ENCODE measurements at regions of chr1 and their contacts with region 1.

Region 1: DNA sequence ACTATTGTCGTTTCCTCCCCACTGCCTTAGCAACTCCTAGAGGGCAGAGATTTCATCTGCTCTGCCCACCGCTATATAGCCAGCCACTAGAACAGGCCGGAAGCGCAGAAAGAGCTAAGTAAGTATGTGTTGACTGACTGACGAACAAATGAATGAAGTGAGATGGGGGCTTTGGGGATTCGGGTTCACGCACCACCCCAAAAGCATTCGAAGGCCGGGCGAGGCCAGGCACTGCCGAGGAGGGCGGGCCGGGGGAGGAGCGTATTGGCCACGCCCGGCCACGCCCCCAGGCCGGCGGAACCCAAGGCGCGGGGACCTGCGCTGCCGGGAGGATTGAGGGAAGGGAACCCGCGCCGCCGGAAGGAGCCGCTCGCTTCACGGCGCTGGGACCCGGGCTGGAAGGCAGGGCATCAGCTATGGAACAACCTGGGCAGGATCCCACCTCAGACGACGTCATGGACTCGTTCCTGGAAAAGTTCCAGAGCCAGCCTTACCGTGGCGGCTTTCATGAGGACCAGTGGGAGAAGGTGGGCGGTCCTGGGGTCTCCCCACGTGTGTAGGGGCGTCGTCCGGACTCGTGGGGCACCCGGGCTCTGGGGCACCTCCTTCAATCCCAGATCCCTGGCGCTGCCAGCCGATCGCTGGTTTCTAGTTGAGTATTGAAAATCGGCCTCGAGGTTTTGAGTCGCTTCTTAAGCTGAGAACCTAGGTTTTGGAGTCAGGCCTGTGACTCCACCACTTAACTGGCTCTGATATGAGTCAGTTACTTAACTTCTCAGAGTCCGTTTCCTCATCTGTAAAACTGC is at the start of gene TTC4:
- DNase-seq: peak; percentile 90
- H3K4me3 ChIP-seq: peak within 1 kb of the TSS; percentile 73 to 84 (median 77)
- H3K27ac ChIP-seq: peak within 1 kb of the TSS; percentile 75 to 86 (median 80)
- H3K4me1 ChIP-seq: peaks cover 0 to 18% (median 15%) of the 10 kb centered on the region in 4 donors
- H3K27me3 ChIP-seq: no peaks in the 10 kb centered on the region
- CTCF ChIP-seq: no peak
- EP300 ChIP-seq: no peak
- POLR2A ChIP-seq: peak; percentile 31 to 32
- total RNA-seq, gene TTC4: 12.6 to 33.4 (median 27.2) TPM

Region 2: GRCh38 chr1:54547601-54548388 is 167.9 kb before region 1 on chr1 and contains the start of gene ACOT11:
- intact Hi-C with region 1: loop called (anchors 5 kb)
- DNase-seq: peak; percentile 98
- H3K4me3 ChIP-seq: peak within 1 kb of the TSS; percentile 17 to 51 (median 46)
- H3K27ac ChIP-seq: peak within 1 kb of the TSS; percentile 83 to 90 (median 88)
- H3K4me1 ChIP-seq: peaks cover 0 to 53% (median 51%) of the 10 kb centered on the region in 4 donors
- H3K27me3 ChIP-seq: no peaks in the 10 kb centered on the region
- CTCF ChIP-seq: peak; percentile 66 to 93 (median 78)
- EP300 ChIP-seq: peak; percentile 30 to 83 (median 60)
- POLR2A ChIP-seq: peak in 1 of 2 donors; percentile 50
- total RNA-seq, gene ACOT11: 8.9 to 30.5 (median 19.8) TPM

Region 3: GRCh38 chr1:54764133-54764921 is 48.6 kb after region 1 on chr1 and contains the start of gene PARS2:
- intact Hi-C with region 1: loop called (anchors 5 kb)
- DNase-seq: peak; percentile 99
- H3K4me3 ChIP-seq: peak within 1 kb of the TSS; percentile 69 to 88 (median 81)
- H3K27ac ChIP-seq: peak within 1 kb of the TSS; percentile 73 to 84 (median 78)
- H3K4me1 ChIP-seq: peaks cover 0 to 17% (median 12%) of the 10 kb centered on the region in 4 donors
- H3K27me3 ChIP-seq: no peaks in the 10 kb centered on the region
- CTCF ChIP-seq: no peak
- EP300 ChIP-seq: peak in 1 of 4 donors; percentile 64
- POLR2A ChIP-seq: peak; percentile 67 to 73
- total RNA-seq, gene PARS2: 3.3 to 5.7 (median 4.9) TPM

Region 4: DNA sequence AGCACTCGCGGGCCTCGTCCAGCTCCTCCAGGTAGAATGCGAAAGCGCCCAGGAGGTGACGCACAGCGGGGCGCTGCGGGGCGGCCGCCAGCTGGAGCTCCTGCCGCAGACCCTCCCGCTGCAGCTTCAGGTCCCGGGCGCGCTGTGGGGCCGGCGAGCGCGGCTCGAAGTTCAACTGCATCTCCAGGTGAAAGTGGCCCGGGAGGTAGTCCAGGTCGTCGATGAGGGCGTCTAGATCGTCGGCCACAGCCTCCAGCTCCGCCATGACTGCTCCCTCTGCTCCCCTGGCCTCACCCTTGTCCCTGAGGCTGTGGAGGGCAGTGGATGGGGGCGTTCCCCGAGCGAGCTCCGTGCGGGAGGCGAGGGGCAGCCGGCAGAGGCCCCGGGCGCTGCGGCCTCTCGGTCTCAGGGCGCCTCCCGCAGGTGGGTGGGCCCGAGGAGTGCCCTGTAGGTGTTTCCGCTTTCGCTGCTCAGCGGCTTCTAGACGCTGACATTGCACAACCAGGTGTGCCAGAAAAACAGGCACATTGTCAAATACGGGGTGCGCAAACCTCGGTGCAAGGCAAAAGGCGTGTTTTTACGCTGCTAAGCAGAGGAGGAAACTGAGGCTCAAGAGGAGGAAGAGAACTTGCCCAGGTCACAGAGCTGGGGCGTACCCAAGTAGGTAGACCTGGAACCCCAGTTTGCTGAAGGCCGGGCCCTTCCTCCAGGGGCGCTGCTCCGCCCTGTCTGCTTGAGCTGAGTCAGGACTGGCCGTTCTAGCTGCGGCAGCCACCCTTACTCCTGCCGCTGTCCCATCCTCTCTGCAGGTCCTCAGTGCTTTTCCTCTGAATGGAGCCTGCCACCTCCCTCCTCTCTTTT is 85.4 kb after region 1 on chr1 and contains the start of gene TTC22:
- intact Hi-C with region 1: loop called (anchors 5 kb)
- DNase-seq: peak; percentile 76
- H3K4me3 ChIP-seq: peak within 1 kb of the TSS; percentile 29 to 55 (median 50)
- H3K27ac ChIP-seq: peak within 1 kb of the TSS in 3 of 4 donors; percentile 37 to 68 (median 54)
- H3K4me1 ChIP-seq: peaks cover 0 to 31% (median 19%) of the 10 kb centered on the region in 4 donors
- H3K27me3 ChIP-seq: peaks cover 0 to 25% (median 0%) of the 10 kb centered on the region in 3 donors
- CTCF ChIP-seq: peak in 2 of 4 experiments; percentile 49 to 50
- EP300 ChIP-seq: no peak
- POLR2A ChIP-seq: peak in 1 of 2 donors; percentile 17
- total RNA-seq, gene TTC22: 0.81 to 1.9 (median 0.95) TPM

Measured in sigmoid colon (tissue), 7 donors.